GM18951 (cell line): ENCODE measurements at regions of chr17 and their contacts with region 1.

Region 1: GRCh38 chr17:76467366-76467765 is at the start of gene AANAT:
- POLR2A ChIP-seq: no peak

Region 2: GRCh38 chr17:76357597-76358158 is 109.7 kb before region 1 on chr17:
- in situ Hi-C with region 1: no loop called
- POLR2A ChIP-seq: no peak

Region 3: DNA sequence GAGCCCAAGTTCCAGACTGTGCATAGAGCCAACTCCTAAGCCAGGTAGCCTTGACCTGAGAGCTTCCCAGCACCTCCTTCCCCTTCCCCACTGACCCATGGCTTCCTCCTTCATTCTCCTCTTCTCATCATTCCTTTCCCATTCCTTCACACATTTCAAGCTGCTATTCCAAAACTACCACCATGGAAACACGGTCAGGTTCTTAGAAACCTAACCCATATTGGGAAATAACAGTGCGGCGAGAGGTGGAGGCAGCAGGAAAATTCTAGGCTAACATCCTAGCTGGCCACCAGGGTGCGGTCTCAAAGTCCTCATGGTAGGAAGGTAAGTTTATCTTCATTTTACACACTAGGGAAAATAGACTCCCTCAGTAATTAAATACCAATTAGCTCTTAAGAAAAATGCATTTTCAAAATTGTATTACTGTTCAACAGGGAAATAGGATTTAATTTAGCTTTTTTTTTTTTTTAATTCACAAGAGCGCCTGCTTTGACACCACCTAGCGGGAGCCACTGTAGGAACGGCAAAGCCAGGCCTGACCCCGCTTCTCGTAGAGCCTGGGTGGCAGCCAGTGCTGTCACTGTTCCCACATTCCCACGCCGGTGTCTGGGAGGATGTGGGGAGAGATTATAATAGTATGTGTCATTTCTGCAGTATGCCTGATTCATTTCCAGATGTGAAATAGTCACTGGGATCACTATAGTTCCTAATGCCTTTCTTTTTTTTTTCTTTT is 96.9 kb before region 1 on chr17:
- in situ Hi-C with region 1: no loop called
- POLR2A ChIP-seq: no peak

Region 4: DNA sequence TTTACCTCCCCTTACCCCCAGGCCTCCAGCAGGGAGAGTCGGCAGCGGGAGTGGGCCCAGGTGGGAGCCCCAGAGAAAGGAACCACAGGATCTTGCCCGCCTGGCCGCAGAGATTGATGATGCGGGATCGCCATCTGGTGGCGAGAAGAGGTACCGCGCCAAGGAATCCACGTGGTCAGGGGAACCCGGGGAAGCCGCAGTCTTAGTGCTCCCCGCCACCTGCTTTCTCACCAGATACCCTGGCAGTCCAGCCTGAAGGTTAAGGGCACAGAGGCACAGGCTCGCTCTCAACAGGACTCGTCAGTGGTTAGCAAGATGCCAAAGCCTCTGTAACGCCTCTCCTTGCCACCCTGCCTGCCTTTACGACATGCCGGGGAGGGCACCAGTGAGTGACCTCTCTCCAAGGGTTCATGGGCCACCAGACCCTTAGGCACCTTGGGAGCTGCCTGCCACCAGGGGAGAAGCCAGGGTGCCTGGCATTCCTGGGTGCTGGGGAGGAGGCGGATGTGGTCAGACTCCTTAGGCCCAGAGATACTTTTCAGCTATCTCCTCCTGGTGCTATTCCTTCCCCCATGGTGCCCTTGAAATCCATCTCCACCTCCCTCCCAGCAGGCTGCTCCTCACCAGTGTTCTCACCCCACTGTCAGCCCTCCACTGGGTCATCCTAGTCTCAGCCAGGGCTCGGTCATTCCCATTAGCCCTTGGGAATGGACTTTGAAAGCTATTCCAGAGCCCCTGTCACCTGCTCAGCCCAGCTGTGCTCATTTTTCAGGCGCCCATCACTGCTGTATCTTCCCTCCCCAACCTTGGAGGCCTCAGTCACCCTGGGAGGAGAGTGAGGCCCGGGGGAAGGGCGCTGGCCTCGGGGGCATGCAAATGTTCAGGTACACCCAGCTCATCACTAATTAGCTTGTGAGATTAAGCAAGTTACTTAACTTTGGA is 39.3 kb after region 1 on chr17:
- in situ Hi-C with region 1: loop called (anchors 5 kb)
- POLR2A ChIP-seq: no peak